ENCODE measurements at regions of chr1 and their contacts with region 1.

Region 1: DNA sequence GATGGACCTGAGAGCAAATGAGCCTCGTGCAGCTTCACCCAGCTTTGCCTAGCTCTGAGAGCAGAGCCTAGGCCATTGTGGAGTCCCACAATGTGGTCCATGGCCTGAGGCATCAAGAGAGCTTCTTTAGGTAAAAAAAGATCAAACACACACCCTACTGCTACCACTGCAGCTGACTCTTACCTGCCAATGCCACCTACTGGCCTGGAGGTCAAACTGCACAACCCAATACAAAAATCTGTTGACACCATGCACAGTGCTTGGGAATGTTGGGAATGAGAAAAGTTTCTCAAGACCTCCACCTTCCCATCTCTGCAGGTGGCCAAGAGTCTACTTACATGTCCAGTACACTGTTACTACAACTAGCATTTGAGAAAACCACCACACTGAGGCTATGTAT is 60.6 kb downstream of the UCHL5 start:
- DNase-seq: peak in 1 of 2 experiments; percentile 22
- H3K4me3 ChIP-seq: no peak overlapping the region
- H3K4me3 Mint-ChIP-seq: no peak overlapping the region
- H3K27ac Mint-ChIP-seq: no peak overlapping the region
- H3K4me1 ChIP-seq: 0 out of 2 replicates have a peak, but pooled peaks cover 2% of the 10 kb centered on the region
- H3K4me1 Mint-ChIP-seq: no peaks in the 10 kb centered on the region
- H3K27me3 ChIP-seq: no peaks in the 10 kb centered on the region
- H3K27me3 Mint-ChIP-seq: no peaks in the 10 kb centered on the region
- CTCF ChIP-seq: peak; percentile 20 to 39

Region 2: GRCh38 chr1:192954705-192955265 is 43.8 kb before region 1 on chr1:
- CTCF ChIA-PET with region 1: no interaction called
- POLR2A ChIA-PET with region 1: no interaction called
- intact Hi-C with region 1: no loop called
- DNase-seq: peak; percentile 21 to 37
- H3K4me3 ChIP-seq: no peak overlapping the region
- H3K4me3 Mint-ChIP-seq: no peak overlapping the region
- H3K27ac Mint-ChIP-seq: no peak overlapping the region
- H3K4me1 ChIP-seq: no peaks in the 10 kb centered on the region
- H3K4me1 Mint-ChIP-seq: peaks cover 2% of the 10 kb centered on the region
- H3K27me3 ChIP-seq: no peaks in the 10 kb centered on the region
- H3K27me3 Mint-ChIP-seq: no peaks in the 10 kb centered on the region
- CTCF ChIP-seq: no peak

Region 3: GRCh38 chr1:193019442-193020026 is 21.0 kb after region 1 on chr1:
- CTCF ChIA-PET with region 1: interaction called, 3 read pairs
- POLR2A ChIA-PET with region 1: no interaction called
- intact Hi-C with region 1: loop called (anchors 1 kb)
- DNase-seq: peak in 1 of 2 experiments; percentile 63
- H3K4me3 ChIP-seq: no peak overlapping the region
- H3K4me3 Mint-ChIP-seq: no peak overlapping the region
- H3K27ac Mint-ChIP-seq: no peak overlapping the region
- H3K4me1 ChIP-seq: no peaks in the 10 kb centered on the region
- H3K4me1 Mint-ChIP-seq: no peaks in the 10 kb centered on the region
- H3K27me3 ChIP-seq: no peaks in the 10 kb centered on the region
- H3K27me3 Mint-ChIP-seq: no peaks in the 10 kb centered on the region
- CTCF ChIP-seq: peak; percentile 44 to 50

Region 4: GRCh38 chr1:193042766-193043691 is 44.5 kb after region 1 on chr1:
- CTCF ChIA-PET with region 1: no interaction called
- POLR2A ChIA-PET with region 1: no interaction called
- intact Hi-C with region 1: no loop called
- DNase-seq: no peak
- H3K4me3 ChIP-seq: no peak overlapping the region
- H3K4me3 Mint-ChIP-seq: no peak overlapping the region
- H3K27ac Mint-ChIP-seq: no peak overlapping the region
- H3K4me1 ChIP-seq: no peaks in the 10 kb centered on the region
- H3K4me1 Mint-ChIP-seq: no peaks in the 10 kb centered on the region
- H3K27me3 ChIP-seq: no peaks in the 10 kb centered on the region
- H3K27me3 Mint-ChIP-seq: no peaks in the 10 kb centered on the region
- CTCF ChIP-seq: no peak

Measured in Caco-2 (cell line).